AG04449 (cell line): ENCODE measurements at regions of chr20 and their contacts with region 1.

Region 1: DNA sequence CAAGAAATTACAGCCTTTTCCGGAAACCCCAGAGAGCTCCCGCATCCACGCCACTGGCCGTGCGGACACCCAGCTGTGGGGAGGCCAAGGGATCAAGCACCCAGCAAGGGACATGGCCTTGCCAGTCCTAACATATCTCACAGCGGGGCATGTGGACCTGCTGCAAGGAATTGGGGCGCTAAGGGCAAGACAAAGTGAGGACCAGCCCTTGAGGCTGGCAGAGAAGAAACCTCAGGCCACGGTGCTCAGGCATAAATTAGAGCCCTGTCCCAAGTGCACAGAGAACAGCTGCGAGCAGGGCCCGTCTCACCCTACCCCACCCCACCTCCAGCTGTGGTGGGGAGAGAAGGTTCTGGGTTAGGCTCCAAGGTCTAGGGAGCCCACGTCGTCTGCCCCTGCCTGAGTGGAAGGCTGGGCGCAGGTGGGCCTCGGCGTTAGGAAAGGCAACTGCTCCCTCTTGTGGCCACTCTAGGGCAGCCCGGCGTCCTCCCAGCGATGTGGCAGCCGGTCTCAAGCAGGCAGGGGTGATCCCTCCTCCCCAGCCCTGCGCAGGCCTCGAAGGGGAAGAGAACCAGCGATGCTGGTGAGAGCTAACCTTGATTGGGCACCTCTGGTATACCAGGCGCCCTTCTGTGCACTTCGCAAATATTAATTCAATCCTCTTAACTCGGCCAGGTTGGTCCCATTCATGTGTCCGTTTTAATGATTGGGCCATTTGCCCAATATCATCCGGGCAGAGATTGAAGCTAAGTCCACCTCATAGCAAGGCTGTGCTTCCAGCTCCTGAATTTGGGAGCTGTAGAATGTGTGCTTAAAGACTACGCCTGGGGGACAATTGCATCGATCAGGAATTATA is 235.8 kb downstream of the NFATC2 start:
- DNase-seq: no peak
- H3K4me3 ChIP-seq: no peak overlapping the region
- CTCF ChIP-seq: peak; percentile 98

Region 2: GRCh38 chr20:50824193-50824632 is 482.5 kb before region 1 on chr20:
- CTCF ChIA-PET with region 1: no interaction called
- POLR2A ChIA-PET with region 1: no interaction called
- DNase-seq: no peak
- H3K4me3 ChIP-seq: no peak overlapping the region
- CTCF ChIP-seq: no peak

Region 3: DNA sequence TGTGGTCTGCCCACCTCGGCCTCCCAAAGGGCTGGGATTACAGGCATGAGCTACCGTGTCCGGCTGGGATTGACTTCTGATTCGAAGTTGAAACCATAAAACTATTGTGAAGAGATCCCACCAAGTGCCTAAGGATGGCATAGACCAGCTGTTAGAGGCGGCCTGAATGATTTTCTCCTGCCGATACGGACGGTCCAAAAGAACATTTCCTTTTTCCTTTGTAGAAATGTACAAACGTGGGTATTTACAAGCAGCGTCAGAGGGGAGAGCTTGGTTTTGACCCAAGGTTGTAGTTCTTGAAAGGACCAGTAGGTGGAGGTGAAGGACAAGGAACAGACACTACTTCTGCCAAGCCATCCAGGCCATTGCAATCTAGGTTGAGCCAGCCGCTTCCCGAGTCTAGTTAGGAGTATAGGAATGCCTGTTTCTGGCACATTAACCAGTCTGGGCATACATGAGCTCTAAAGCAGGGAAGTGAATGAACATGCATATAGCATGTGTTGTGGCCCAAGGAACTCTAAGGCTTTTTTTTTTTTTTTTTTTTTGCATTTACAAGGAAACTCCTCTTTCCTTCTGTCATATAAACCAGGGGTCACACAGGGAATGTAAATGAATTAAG is 319.0 kb before region 1 on chr20:
- CTCF ChIA-PET with region 1: interaction called, 626 read pairs
- POLR2A ChIA-PET with region 1: no interaction called
- DNase-seq: peak; percentile 60
- H3K4me3 ChIP-seq: no peak overlapping the region
- CTCF ChIP-seq: peak; percentile 79

Region 4: GRCh38 chr20:51014797-51015722 is 291.7 kb before region 1 on chr20:
- CTCF ChIA-PET with region 1: interaction called, 144 read pairs
- POLR2A ChIA-PET with region 1: no interaction called
- DNase-seq: no peak
- H3K4me3 ChIP-seq: no peak overlapping the region
- CTCF ChIP-seq: peak; percentile 88

Region 5: GRCh38 chr20:51036827-51037531 is 269.8 kb before region 1 on chr20:
- CTCF ChIA-PET with region 1: interaction called, 16 read pairs
- POLR2A ChIA-PET with region 1: no interaction called
- DNase-seq: no peak
- H3K4me3 ChIP-seq: no peak overlapping the region
- CTCF ChIP-seq: no peak

Region 6: DNA sequence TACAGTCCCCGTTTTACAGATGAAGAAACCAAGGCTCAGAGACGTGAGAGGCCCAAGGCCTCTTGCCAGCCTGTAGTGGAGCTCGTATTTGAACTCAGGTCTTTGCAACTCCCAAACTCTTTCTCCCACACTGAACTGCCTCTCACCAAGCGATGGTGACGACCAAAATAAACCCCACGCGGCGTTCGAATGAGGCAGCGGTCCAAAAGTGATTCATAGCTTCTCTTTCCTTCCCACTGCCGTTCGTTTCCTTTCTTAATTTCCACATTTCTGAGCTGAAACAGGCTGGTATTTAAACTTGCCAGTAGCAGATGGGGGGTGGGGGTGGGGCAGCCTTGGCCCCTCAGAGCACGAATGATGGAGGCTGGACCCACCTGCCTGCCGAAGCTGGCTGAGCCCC is 30.9 kb before region 1 on chr20:
- CTCF ChIA-PET with region 1: interaction called, 10 read pairs
- POLR2A ChIA-PET with region 1: no interaction called
- DNase-seq: no peak
- H3K4me3 ChIP-seq: no peak overlapping the region
- CTCF ChIP-seq: no peak

Region 7: DNA sequence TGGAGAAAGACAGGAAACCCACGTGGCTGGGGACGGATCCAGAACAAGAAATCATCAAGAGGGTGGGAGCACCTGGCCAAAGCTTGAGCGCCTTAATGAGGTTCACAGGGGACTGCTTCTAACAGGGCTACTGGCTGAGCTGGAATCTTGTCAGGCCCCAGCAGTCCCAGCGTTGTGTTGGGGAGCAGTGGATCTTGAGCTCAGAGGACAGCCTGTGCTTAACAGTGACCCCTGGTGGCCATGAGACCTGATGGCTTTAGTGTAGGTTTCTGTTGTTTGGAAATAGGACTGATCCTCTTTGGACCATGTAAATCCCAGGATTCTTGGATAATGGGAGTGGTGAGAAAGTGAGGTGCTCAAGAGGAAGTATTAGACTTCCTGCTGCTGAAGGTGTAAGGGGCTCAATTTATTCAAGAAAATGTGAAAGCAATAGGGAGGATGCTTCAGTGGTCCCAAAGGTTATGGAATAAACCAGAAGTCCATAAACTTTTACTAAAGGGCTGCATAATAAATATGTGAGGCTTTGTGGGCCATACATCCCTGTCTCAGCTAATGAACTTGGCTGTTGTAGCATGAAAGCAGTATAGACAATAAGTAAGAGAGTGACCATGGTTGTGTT is 19.6 kb after region 1 on chr20:
- CTCF ChIA-PET with region 1: interaction called, 108 read pairs
- POLR2A ChIA-PET with region 1: no interaction called
- DNase-seq: no peak
- H3K4me3 ChIP-seq: no peak overlapping the region
- CTCF ChIP-seq: no peak

Region 8: DNA sequence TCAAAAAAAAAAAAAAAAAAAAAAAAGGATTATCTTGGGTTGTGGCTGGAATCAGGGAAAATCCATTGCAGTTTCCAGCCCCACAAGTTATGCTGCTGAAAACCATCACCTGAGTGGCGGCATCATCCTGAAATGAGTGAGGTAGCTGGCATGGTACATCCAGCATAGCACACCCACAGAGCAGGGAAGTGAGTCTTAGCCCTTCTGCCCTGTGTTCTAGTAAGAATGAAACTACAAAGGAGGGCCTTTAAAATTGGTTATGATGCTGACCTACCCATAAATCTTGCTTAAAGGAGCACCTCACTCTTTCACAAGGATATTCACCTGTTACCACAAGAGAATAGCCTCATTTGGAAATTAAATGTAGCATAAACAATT is 116.5 kb after region 1 on chr20:
- CTCF ChIA-PET with region 1: no interaction called
- POLR2A ChIA-PET with region 1: no interaction called
- DNase-seq: no peak
- H3K4me3 ChIP-seq: no peak overlapping the region
- CTCF ChIP-seq: no peak

Region 9: DNA sequence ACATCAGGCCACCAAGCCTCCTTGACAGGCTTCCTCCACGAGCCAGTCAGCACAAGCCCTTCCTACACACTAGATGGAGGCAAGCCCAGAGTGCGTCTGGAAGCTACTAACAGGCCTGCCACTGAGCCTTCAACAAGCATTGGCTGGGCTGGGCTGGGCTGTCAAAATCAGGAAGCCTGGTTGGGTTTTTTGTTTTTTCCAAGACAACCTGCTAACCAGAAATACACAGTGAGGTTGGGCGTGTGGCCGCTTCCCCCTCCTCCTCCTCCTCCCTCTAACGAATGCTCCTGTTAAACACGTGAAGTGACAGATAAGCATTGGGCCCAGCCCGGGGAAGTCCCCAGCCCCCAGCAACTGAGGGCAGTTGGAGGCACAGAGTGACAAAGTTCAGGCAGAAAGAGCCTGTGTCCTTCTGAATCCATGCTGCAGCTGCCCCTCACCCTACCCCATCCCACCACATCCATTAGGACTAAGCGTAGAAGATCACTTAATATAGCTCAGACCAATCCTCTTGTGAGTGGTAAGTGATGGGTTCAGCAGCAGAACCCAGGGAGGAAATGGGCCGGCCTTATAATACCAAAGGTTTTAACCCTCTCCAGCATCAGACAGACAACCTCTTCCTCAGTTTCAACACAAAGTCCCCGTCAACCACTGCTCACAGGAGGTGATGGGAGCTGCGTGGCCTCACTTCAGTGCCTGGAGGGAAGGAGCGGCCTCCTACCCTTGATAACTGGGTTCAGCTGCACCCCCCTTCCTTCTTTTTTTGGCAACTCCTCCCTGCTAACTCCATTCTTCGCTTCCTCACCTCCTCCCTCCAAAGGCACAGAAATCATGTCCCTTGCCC is 234.7 kb after region 1 on chr20:
- CTCF ChIA-PET with region 1: no interaction called
- POLR2A ChIA-PET with region 1: no interaction called
- DNase-seq: no peak
- H3K4me3 ChIP-seq: no peak overlapping the region
- CTCF ChIP-seq: no peak